CD8-positive, alpha-beta memory T cell (primary cell): ENCODE measurements at regions of chr11 and their contacts with region 1.

Region 1: GRCh38 chr11:10943968-10944367 is 86.1 kb upstream of the ZBED5 start:
- DNase-seq: no peak
- H3K4me3 ChIP-seq: no peak overlapping the region
- H3K4me3 Mint-ChIP-seq: no peak overlapping the region
- H3K27ac ChIP-seq: no peak overlapping the region
- H3K27ac Mint-ChIP-seq: no peak overlapping the region
- H3K4me1 ChIP-seq: no peaks in the 10 kb centered on the region
- H3K4me1 Mint-ChIP-seq: no peaks in the 10 kb centered on the region
- H3K27me3 ChIP-seq: no peaks in the 10 kb centered on the region
- H3K27me3 Mint-ChIP-seq: peaks cover 9 to 12% of the 10 kb centered on the region in 2 donors

Region 2: DNA sequence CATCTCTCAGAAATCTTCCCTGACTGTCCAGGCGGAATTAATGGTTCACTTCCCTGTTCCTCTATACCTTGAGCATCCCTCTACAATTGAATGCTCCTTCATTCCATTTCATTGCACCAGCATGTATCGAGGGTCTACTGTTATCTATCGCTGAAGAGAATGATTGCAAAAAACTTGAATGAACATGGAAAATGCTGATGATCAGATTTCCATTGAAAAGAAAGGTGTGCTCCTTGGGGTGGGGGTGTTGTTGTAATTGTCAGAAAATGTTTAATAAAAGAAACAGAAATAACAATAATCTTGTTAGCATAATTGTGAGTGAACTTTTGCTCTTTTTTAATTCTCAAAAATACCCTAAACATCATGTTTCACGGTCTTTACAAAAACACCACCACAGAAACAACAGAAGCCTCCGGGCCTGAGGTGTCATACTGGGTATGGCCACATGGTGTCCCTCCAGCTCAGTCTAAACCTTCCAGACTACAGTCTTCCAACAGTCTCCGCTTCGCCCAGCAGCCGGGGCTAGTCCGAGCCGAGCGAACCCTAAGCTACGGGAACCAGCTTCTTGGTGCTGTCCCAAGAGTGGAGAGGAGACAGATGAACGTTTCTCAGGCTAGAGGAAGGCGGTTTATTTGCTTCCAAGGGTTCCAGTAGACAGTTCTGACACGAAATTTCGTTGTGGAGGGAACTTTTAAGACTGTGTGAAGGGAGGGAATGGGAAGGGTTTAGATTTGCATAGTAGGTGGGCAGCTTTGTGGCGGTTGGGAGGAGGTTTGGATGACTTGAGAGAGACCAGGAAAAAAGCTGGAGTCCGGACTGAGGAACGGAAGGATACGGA is 10.3 kb before region 1 on chr11:
- CTCF ChIA-PET with region 1: interaction called, 28 read pairs
- POLR2A ChIA-PET with region 1: no interaction called
- DNase-seq: peak; percentile 56 to 81 (median 65)
- H3K4me3 ChIP-seq: peak overlapping the region; percentile 59
- H3K4me3 Mint-ChIP-seq: peak overlapping the region; percentile 74 to 92 (median 85)
- H3K27ac ChIP-seq: no peak overlapping the region
- H3K27ac Mint-ChIP-seq: peak overlapping the region in 5 of 8 donors; percentile 1 to 52 (median 24)
- H3K4me1 ChIP-seq: peaks cover 5% of the 10 kb centered on the region
- H3K4me1 Mint-ChIP-seq: peaks cover 15 to 22% (median 21%) of the 10 kb centered on the region in 3 donors
- H3K27me3 ChIP-seq: peaks cover 25% of the 10 kb centered on the region
- H3K27me3 Mint-ChIP-seq: peaks cover 18 to 39% of the 10 kb centered on the region in 2 donors